ENCODE measurements at regions of chr7 and their contacts with region 1.

Region 1: DNA sequence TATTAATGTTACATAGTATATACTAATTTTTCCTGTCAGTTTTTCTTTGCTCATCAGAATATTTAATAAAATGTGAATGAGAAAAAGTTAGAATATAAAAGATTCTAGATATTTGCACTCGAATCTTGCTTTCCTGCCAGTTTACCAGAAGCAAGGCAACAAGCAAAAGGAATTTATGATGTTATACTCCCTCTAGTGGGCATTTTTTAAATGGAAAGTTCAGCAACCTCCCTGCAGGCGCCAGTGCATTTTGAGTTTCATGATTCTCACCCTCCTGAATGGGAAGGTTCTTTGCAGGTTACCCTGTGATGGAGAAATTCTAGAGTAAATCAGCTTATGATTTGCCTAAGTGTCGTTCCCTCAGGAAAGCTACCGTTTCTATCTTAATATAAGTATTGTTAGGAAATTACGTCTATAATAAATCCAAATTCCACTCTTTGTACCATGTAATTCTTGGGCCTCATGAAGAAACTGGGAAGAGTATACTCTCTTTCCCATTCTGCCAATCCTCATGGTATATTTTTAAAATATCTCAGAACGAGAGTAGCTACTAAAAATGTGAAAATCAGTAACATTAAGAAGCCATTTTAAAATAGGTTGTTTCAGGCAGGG is 350.0 kb downstream of the CRPPA start:
- DNase-seq: peak; percentile 82

Region 2: GRCh38 chr7:15326044-15326644 is 745.2 kb before region 1 on chr7:
- in situ Hi-C with region 1: loop called (anchors 25 kb)
- DNase-seq: peak; percentile 47

Region 3: DNA sequence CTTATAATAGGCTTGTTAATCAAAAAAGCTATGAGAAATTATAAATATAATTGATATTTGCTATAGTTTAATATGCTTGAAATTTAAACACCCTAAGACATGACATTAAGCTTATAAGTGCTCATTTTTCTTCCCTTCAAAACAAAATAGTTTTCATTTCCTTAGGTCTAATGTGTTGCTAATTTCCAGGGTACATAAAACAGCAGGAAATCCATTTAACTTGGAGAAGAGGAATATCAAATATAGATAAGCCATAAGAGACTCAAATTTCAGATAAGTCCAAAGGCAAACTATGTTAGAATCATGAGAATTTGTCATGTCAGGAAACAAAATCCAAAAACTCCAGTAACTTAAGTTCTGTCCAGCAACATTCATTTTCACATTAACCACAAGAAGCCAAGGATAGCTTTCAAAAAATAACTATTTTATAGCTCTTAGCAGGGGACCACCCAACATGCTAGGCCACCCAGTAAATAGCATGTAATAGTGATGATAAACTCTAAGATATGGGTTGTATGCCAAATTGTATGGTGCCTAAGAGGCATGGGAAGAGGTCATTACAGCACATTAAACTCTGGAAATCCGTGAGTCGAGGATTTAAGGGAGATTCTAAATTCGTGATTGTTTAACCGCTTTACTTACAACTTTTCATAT is 51.9 kb after region 1 on chr7:
- in situ Hi-C with region 1: no loop called
- DNase-seq: no peak